ENCODE measurements at regions of chr3 and their contacts with region 1.

Region 1: DNA sequence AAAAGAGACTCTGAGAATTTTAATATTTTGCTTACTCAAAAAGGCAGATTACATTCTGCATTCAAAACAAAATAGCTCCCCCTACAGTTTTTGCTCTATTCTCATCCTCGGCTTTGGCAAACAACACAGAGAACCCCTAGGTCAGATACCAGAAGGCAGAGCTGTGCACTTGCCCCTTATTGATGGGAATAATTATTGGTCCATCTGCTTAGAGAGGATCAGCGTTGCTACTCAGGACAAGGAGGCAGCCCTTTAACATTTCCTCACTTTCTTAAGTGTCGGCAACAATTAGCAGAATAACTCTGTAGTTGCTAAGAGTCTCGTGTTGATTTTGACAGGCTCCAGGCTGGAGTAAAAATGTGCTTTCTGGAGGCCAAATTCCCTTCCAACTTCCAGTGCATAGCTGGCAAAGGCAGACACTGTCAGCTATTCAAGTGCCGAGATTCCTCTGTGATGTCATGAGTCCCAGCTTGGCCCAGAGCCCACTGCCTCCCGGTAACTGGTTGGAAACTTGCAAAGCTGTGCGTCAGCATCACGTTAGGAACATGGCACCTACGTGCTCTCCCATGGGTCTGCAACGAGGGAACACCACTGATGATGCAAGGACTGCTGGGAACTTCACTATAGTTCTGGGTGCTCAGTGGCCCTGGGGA is 482.7 kb upstream of the ADAMTS9 start:
- DNase-seq: peak; percentile 50
- H3K4me3 Mint-ChIP-seq: peak overlapping the region; percentile 7
- H3K27ac Mint-ChIP-seq: no peak overlapping the region
- H3K4me1 Mint-ChIP-seq: peaks cover 31% of the 10 kb centered on the region
- H3K27me3 Mint-ChIP-seq: no peaks in the 10 kb centered on the region
- CTCF ChIP-seq: no peak

Region 2: GRCh38 chr3:64685800-64686445 is 484.6 kb before region 1 on chr3:
- CTCF ChIA-PET with region 1: no interaction called
- intact Hi-C with region 1: loop called (anchors 10 kb)
- DNase-seq: peak; percentile 95
- H3K4me3 Mint-ChIP-seq: peak overlapping the region; percentile 81
- H3K27ac Mint-ChIP-seq: peak overlapping the region; percentile 97
- H3K4me1 Mint-ChIP-seq: peaks cover 21% of the 10 kb centered on the region
- H3K27me3 Mint-ChIP-seq: no peaks in the 10 kb centered on the region
- CTCF ChIP-seq: no peak

Region 3: GRCh38 chr3:65039754-65040210 is 130.7 kb before region 1 on chr3:
- CTCF ChIA-PET with region 1: no interaction called
- intact Hi-C with region 1: no loop called
- DNase-seq: no peak
- H3K4me3 Mint-ChIP-seq: no peak overlapping the region
- H3K27ac Mint-ChIP-seq: no peak overlapping the region
- H3K4me1 Mint-ChIP-seq: no peaks in the 10 kb centered on the region
- H3K27me3 Mint-ChIP-seq: no peaks in the 10 kb centered on the region
- CTCF ChIP-seq: no peak

Region 4: GRCh38 chr3:65356331-65357286 is 186.1 kb after region 1 on chr3:
- CTCF ChIA-PET with region 1: no interaction called
- intact Hi-C with region 1: no loop called
- DNase-seq: no peak
- H3K4me3 Mint-ChIP-seq: no peak overlapping the region
- H3K27ac Mint-ChIP-seq: no peak overlapping the region
- H3K4me1 Mint-ChIP-seq: no peaks in the 10 kb centered on the region
- H3K27me3 Mint-ChIP-seq: no peaks in the 10 kb centered on the region
- CTCF ChIP-seq: no peak